Sigmoid colon (tissue), 7 donors: ENCODE measurements at regions of chr4 and their contacts with region 1.

Region 1: GRCh38 chr4:138680989-138681604 is 334.5 kb upstream of the NOCT start:
- DNase-seq: peak; percentile 89
- H3K4me3 ChIP-seq: no peak overlapping the region
- H3K27ac ChIP-seq: no peak overlapping the region
- H3K4me1 ChIP-seq: peaks cover 0 to 29% (median 13%) of the 10 kb centered on the region in 4 donors
- H3K27me3 ChIP-seq: no peaks in the 10 kb centered on the region
- CTCF ChIP-seq: peak; percentile 50 to 91 (median 85)
- EP300 ChIP-seq: no peak
- POLR2A ChIP-seq: no peak

Region 2: GRCh38 chr4:137124278-137124932 is 1556.7 kb before region 1 on chr4:
- intact Hi-C with region 1: loop called (anchors 5 kb)
- DNase-seq: no peak
- H3K4me3 ChIP-seq: peak overlapping the region; percentile 17 to 44 (median 38)
- H3K27ac ChIP-seq: no peak overlapping the region
- H3K4me1 ChIP-seq: no peaks in the 10 kb centered on the region
- H3K27me3 ChIP-seq: no peaks in the 10 kb centered on the region
- CTCF ChIP-seq: peak; percentile 16 to 59 (median 46)
- EP300 ChIP-seq: no peak
- POLR2A ChIP-seq: no peak

Region 3: GRCh38 chr4:138035781-138036258 is 645.3 kb before region 1 on chr4:
- intact Hi-C with region 1: loop called (anchors 2 kb)
- DNase-seq: no peak
- H3K4me3 ChIP-seq: no peak overlapping the region
- H3K27ac ChIP-seq: no peak overlapping the region
- H3K4me1 ChIP-seq: no peaks in the 10 kb centered on the region
- H3K27me3 ChIP-seq: no peaks in the 10 kb centered on the region
- CTCF ChIP-seq: peak in 3 of 4 experiments; percentile 41 to 57 (median 41)
- EP300 ChIP-seq: no peak
- POLR2A ChIP-seq: no peak

Region 4: DNA sequence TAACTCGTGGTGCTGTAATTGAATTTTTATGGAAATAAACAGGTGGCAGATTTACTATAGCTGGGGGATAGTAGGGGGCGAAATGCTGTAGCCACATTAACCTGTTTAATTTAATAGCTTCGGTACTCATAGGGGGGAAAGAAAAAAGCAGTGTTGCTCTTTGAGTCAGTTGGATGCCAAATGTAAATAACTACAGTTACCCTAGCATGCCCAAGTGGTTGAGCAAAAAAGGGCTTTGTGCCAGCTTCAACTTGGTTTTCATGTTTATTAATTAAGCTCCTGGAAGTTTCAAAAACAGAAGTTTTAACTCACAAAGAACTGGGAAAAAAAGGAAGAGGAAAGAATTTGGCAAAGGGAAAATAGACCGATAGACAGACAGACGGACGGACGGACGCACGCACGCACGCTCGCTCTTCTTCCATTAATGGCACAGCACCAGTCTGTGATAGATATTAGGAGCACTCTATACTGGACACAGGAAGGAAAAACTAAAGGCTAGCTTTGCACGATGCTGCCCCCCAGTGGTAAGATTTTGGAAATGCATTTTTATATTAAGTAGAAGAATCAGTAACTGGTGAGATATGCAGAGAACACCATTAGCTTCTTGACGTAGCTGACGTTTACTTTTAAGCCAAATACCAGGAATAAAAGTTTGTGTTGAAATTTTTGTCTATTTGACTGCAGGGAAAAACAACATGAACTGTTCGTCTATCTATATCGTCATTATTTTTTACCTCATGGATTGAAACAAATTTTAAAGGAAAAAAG is 590.8 kb before region 1 on chr4:
- intact Hi-C with region 1: loop called (anchors 1 kb)
- DNase-seq: peak; percentile 70
- H3K4me3 ChIP-seq: peak overlapping the region in 3 of 4 donors; percentile 25 to 38 (median 28)
- H3K27ac ChIP-seq: no peak overlapping the region
- H3K4me1 ChIP-seq: peaks cover 0 to 22% (median 15%) of the 10 kb centered on the region in 4 donors
- H3K27me3 ChIP-seq: no peaks in the 10 kb centered on the region
- CTCF ChIP-seq: peak; percentile 53 to 79 (median 66)
- EP300 ChIP-seq: no peak
- POLR2A ChIP-seq: no peak

Region 5: DNA sequence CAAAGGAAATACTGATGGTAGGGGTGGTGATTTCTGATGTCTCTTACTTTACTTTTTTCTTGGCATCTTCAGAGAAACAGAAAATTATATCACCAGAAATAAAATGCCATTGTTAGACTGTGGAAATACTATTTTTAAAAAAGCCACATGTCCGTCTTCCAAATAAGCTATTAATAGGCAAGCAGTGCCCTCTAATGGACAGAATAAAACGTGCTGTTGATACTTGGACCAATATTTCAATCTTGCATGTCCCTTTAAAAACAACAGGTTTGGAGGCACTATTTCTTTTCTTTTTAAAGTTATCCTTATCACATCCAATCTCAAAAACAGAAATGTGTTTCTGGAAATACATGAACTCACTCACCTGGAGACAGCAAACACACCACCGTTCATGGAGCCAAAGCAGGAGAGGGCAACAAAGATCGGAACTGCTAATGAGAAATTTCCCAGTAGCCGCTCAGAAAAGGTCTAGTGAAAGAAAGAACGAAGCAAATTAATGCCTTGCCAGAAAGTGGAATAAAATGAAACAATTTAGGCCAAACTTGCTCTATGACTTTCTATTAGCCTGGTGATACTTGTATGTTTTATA is 498.2 kb before region 1 on chr4:
- intact Hi-C with region 1: loop called (anchors 5 kb)
- DNase-seq: no peak
- H3K4me3 ChIP-seq: no peak overlapping the region
- H3K27ac ChIP-seq: no peak overlapping the region
- H3K4me1 ChIP-seq: no peaks in the 10 kb centered on the region
- H3K27me3 ChIP-seq: no peaks in the 10 kb centered on the region
- CTCF ChIP-seq: peak; percentile 8 to 58 (median 34)
- EP300 ChIP-seq: no peak
- POLR2A ChIP-seq: no peak

Region 6: GRCh38 chr4:138870737-138871554 is 189.8 kb after region 1 on chr4:
- intact Hi-C with region 1: loop called (anchors 2 kb)
- DNase-seq: peak; percentile 71
- H3K4me3 ChIP-seq: no peak overlapping the region
- H3K27ac ChIP-seq: no peak overlapping the region
- H3K4me1 ChIP-seq: peaks cover 0 to 14% (median 12%) of the 10 kb centered on the region in 4 donors
- H3K27me3 ChIP-seq: no peaks in the 10 kb centered on the region
- CTCF ChIP-seq: peak; percentile 61 to 81 (median 78)
- EP300 ChIP-seq: no peak
- POLR2A ChIP-seq: no peak

Region 7: GRCh38 chr4:138938366-138938690 is 257.2 kb after region 1 on chr4:
- intact Hi-C with region 1: loop called (anchors 10 kb)
- DNase-seq: no peak
- H3K4me3 ChIP-seq: no peak overlapping the region
- H3K27ac ChIP-seq: no peak overlapping the region
- H3K4me1 ChIP-seq: peaks cover 0 to 18% (median 3%) of the 10 kb centered on the region in 4 donors
- H3K27me3 ChIP-seq: no peaks in the 10 kb centered on the region
- CTCF ChIP-seq: peak in 2 of 4 experiments; percentile 12 to 35
- EP300 ChIP-seq: no peak
- POLR2A ChIP-seq: no peak